ENCODE measurements at regions of chr16 and their contacts with region 1.

Region 1: DNA sequence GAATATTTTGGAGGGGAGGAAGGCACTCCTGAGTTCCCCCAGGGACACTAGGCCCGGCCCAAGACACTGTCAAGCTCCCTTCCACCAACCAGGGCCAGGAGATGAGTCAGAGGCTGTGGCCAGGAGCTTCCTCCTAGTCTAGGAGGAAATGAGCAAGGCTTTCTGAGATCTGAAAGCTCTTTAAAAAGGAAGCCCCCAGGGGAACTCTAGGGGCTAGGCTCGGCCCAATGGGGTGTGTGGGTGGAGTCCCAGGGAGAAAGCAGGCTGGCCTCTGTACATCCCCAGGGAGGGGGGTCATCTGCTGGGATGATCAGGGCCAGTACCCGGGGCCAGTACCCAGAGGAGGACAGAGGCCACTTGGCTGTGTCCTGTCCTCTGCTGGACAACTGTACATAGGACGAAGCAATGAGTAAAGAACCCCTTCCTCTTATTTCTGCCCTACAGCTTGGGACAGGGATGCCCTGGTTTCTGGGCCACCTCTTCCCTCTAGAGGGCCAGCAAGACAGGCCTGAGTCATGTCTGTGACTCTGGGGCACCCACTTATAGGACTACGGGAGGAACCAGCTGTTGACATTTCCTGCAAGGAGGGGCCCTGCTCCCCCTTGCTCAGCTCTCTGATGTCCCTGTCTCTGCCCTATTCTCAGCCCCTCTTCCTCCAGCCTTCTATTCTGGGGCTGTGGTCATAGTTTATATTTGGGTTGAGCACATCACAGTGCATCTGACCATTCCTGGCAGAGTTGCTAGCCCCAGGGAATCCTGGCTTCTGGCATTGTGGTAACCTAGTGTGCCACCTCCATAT is 2.7 kb downstream of the FHOD1 start:
- DNase-seq: peak; percentile 81 to 86
- H3K4me3 ChIP-seq: no peak overlapping the region
- H3K27ac ChIP-seq: peak overlapping the region; percentile 75 to 83
- H3K4me1 ChIP-seq: peaks cover 0 to 82% (median 68%) of the 10 kb centered on the region in 4 donors
- H3K27me3 ChIP-seq: peaks cover 0 to 15% of the 10 kb centered on the region in 2 donors
- CTCF ChIP-seq: no peak

Region 2: GRCh38 chr16:67229573-67230270 is 14.9 kb before region 1 on chr16:
- intact Hi-C with region 1: loop called (anchors 2 kb)
- DNase-seq: no peak
- H3K4me3 ChIP-seq: no peak overlapping the region
- H3K27ac ChIP-seq: no peak overlapping the region
- H3K4me1 ChIP-seq: peaks cover 0 to 26% (median 16%) of the 10 kb centered on the region in 4 donors
- H3K27me3 ChIP-seq: no peaks in the 10 kb centered on the region
- CTCF ChIP-seq: no peak

Region 3: GRCh38 chr16:67672739-67673662 is 428.4 kb after region 1 on chr16:
- intact Hi-C with region 1: no loop called
- DNase-seq: peak in 1 of 2 donors; percentile 58
- H3K4me3 ChIP-seq: no peak overlapping the region
- H3K27ac ChIP-seq: peak overlapping the region in 1 of 2 donors; percentile 32
- H3K4me1 ChIP-seq: peaks cover 0 to 38% (median 6%) of the 10 kb centered on the region in 4 donors
- H3K27me3 ChIP-seq: no peaks in the 10 kb centered on the region
- CTCF ChIP-seq: peak; percentile 52 to 54